ENCODE measurements at regions of chr20 and their contacts with region 1.

Region 1: DNA sequence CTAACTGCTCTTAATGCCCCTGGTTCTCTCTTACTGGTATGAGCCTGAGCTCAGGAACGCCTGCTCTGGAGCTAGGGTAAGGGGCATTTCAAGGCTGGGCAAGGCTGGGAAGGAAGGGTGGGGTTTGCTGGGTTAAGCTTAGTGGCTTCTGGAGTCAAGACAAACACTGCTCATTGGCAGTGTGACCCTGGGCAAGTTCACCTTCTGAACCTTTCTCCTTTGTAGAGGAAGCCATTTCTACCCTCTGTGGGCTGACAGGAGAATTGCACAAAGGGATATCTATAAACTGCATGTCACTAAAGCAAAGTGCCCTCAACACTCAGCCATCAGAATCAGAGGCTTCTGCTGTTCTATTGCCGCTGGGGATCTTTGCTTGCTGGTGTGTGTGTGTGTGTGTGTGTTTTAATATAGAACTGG is 20.3 kb upstream of the LRRN4 start:
- DNase-seq: no peak
- H3K4me3 ChIP-seq: no peak overlapping the region
- H3K27ac ChIP-seq: no peak overlapping the region
- H3K4me1 ChIP-seq: no peaks in the 10 kb centered on the region
- H3K27me3 ChIP-seq: no peaks in the 10 kb centered on the region
- CTCF ChIP-seq: no peak
- POLR2A ChIP-seq: no peak

Region 2: DNA sequence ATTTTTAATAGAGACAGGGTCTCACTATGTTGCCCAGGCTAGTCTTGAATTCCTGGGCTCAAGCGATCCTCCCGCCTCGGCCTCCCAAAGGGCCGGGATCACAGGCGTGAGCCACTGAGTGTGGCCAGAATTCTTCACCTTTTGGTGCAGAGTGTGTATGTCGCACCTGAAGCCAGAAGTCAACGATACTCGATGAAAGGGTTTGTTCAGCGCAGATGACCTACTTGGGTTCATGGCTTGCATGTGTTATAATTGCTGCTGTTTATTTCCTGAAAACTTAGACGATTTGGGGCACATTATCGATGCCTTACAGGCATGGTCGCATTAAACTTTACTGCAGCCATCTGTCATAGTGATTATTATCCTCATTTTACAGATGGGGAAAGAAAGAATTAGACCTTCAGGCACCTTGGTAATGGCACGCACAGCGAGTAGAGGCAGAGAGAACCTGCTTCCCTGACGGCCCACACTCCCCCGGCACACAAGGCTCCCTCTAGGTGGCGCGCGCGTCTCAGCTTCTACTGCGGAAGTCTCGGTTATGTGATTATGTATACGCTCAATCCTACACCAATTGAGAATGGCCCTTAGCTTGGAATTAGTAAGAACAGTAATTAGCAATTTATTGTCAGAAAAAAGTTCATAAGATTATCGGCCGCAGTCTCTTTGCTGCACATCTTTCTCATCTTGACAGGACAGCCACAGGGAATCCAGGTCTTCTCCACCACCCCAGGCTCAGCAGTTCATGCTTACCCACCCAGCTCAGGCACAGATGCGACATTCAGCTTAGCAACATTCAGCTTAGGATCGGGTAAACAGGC is 544.6 kb before region 1 on chr20:
- intact Hi-C with region 1: loop called (anchors 10 kb)
- DNase-seq: no peak
- H3K4me3 ChIP-seq: no peak overlapping the region
- H3K27ac ChIP-seq: no peak overlapping the region
- H3K4me1 ChIP-seq: peaks cover 11% of the 10 kb centered on the region
- H3K27me3 ChIP-seq: no peaks in the 10 kb centered on the region
- CTCF ChIP-seq: peak in 2 of 3 experiments; percentile 31 to 81
- POLR2A ChIP-seq: no peak

Measured in vagina (tissue), 2 donors.